ENCODE measurements at regions of chr12 and their contacts with region 1.

Region 1: GRCh38 chr12:53805127-53805466 is 53.3 kb upstream of the CISTR start:
- DNase-seq: no peak
- H3K4me3 ChIP-seq: no peak overlapping the region
- H3K27ac ChIP-seq: no peak overlapping the region
- H3K4me1 ChIP-seq: no peaks in the 10 kb centered on the region
- H3K27me3 ChIP-seq: peaks cover 7 to 87% (median 28%) of the 10 kb centered on the region in 5 experiments

Region 2: GRCh38 chr12:53738406-53739213 is 66.5 kb before region 1 on chr12:
- CTCF ChIA-PET with region 1: no interaction called
- POLR2A ChIA-PET with region 1: no interaction called
- DNase-seq: no peak
- H3K4me3 ChIP-seq: peak overlapping the region in 3 of 7 experiments; percentile 2 to 45 (median 33)
- H3K27ac ChIP-seq: no peak overlapping the region
- H3K4me1 ChIP-seq: peaks cover 0 to 32% (median 17%) of the 10 kb centered on the region in 4 experiments
- H3K27me3 ChIP-seq: peaks cover 10 to 87% (median 31%) of the 10 kb centered on the region in 5 experiments

Region 3: DNA sequence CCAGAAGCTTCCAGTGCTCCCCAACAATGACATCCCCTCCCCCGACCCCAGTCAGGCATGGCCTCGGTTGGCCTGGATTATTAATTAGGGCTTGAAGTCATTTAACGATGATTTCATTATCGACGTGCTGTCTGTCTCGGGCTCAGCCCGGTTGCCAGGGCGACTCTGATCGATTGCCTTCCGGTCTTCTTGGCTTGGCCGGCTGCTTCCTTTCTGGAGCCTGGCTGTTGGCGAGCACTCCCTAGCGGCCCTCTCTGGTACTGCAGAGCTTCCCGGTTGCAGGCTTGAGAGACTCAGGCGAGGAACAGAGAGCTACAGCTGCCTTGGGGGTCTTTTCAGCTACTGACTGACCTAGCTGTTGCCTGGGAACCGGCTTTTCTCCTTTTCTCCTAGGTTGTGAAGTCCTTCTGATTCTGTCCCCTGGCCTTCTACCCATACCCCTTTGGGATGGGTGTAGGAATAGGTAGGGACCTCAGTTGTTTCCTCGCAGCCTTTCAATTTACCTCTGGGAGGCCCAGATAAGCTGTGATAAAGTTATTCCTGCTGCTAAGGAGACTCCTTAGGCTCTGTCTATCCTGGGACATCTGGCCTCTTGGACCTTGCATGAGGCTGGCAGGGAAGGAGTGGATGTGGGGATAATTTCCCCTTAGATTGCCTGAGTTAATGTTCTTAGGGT is 47.9 kb before region 1 on chr12:
- CTCF ChIA-PET with region 1: interaction called, 12 read pairs
- POLR2A ChIA-PET with region 1: no interaction called
- DNase-seq: peak; percentile 71 to 82 (median 79)
- H3K4me3 ChIP-seq: peak overlapping the region in 2 of 7 experiments; percentile 48 to 50
- H3K27ac ChIP-seq: no peak overlapping the region
- H3K4me1 ChIP-seq: peaks cover 1 to 64% (median 28%) of the 10 kb centered on the region in 4 experiments
- H3K27me3 ChIP-seq: peaks cover 6 to 82% (median 25%) of the 10 kb centered on the region in 5 experiments

Region 4: DNA sequence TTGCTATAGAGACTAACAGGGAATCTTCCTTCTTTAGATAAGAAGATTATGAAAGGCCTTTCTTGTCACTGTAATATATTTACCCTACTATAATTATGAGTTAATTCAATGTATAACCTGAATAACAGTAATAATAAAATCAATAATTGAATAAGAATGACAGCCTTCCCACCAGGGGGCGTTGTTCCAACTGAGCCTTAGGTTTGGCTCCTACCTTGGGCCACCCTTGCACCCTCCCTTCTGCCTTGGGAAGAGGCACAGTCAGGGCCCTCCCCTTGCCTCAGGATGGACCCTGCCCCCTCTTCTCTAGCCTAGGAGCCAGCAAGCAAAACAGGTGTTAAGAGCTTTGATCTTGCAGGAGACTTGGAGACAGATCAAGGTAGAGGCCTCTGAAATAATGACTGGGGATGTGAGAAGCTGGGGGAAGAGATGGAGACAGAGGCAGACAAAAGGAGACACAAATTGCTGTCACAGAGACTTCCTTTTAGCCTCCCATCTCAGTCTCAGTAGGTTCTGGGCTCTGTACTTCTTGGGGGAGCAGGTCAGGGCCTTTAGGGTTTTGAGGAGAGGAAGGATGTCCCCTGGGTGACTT is 13.3 kb before region 1 on chr12:
- CTCF ChIA-PET with region 1: interaction called, 13 read pairs
- POLR2A ChIA-PET with region 1: no interaction called
- DNase-seq: peak; percentile 22 to 36 (median 26)
- H3K4me3 ChIP-seq: no peak overlapping the region
- H3K27ac ChIP-seq: no peak overlapping the region
- H3K4me1 ChIP-seq: no peaks in the 10 kb centered on the region
- H3K27me3 ChIP-seq: peaks cover 8 to 76% (median 34%) of the 10 kb centered on the region in 5 experiments

Region 5: GRCh38 chr12:53867216-53868001 is 62.3 kb after region 1 on chr12:
- CTCF ChIA-PET with region 1: no interaction called
- POLR2A ChIA-PET with region 1: no interaction called
- DNase-seq: no peak
- H3K4me3 ChIP-seq: no peak overlapping the region
- H3K27ac ChIP-seq: no peak overlapping the region
- H3K4me1 ChIP-seq: no peaks in the 10 kb centered on the region
- H3K27me3 ChIP-seq: peaks cover 4 to 59% (median 10%) of the 10 kb centered on the region in 5 experiments

Region 6: GRCh38 chr12:53892760-53893159 is 87.7 kb after region 1 on chr12:
- CTCF ChIA-PET with region 1: no interaction called
- POLR2A ChIA-PET with region 1: no interaction called
- DNase-seq: peak in 2 of 3 donors; percentile 12 to 23
- H3K4me3 ChIP-seq: no peak overlapping the region
- H3K27ac ChIP-seq: no peak overlapping the region
- H3K4me1 ChIP-seq: no peaks in the 10 kb centered on the region
- H3K27me3 ChIP-seq: peaks cover 7 to 56% (median 23%) of the 10 kb centered on the region in 5 experiments

Measured in common myeloid progenitor, CD34-positive (primary cell).